Calu3 (cell line): ENCODE measurements at regions of chr12 and their contacts with region 1.

Region 1: DNA sequence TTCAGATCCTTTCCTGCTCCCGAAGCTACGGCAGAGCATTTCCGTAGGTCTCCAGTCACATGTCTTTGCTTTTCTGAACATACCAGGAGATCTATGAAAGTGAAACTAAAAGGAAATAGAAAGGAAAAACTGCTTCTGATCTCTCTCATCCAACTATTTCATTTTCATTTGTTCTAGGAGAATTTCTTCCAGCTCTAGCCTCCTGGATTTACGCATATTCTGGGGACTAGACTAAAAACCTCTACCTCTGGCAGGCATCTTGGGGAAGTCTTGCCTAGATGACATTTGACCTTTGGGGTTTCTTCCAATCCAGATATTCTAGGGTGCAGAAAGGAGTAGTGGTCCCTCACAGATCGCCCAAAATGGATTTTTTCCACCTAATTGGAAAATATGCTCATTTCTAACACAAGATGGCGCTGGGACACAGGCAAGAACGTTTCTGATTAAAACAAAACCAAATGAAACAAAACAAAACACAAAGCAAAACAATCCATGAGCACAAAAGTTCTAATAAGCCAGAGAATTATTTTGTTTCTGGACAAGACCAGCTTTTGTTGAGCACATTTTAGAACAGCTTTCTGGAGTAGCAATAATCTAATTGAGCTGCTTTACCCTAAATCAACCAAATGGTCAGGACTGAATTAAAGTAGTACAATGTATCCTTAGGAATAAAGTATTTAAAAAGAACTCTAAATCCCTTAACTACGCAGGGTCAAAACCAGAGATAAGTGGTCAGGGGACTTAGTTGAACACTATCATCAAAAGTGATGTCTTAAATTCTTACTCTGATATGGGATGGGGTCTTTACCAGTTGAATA is 12.3 kb upstream of the PARP11 start:
- DNase-seq: peak; percentile 5
- H3K4me3 Mint-ChIP-seq: no peak overlapping the region
- H3K27ac Mint-ChIP-seq: no peak overlapping the region
- H3K4me1 Mint-ChIP-seq: no peaks in the 10 kb centered on the region
- H3K27me3 Mint-ChIP-seq: peaks cover 23% of the 10 kb centered on the region
- CTCF ChIP-seq: peak; percentile 64

Region 2: DNA sequence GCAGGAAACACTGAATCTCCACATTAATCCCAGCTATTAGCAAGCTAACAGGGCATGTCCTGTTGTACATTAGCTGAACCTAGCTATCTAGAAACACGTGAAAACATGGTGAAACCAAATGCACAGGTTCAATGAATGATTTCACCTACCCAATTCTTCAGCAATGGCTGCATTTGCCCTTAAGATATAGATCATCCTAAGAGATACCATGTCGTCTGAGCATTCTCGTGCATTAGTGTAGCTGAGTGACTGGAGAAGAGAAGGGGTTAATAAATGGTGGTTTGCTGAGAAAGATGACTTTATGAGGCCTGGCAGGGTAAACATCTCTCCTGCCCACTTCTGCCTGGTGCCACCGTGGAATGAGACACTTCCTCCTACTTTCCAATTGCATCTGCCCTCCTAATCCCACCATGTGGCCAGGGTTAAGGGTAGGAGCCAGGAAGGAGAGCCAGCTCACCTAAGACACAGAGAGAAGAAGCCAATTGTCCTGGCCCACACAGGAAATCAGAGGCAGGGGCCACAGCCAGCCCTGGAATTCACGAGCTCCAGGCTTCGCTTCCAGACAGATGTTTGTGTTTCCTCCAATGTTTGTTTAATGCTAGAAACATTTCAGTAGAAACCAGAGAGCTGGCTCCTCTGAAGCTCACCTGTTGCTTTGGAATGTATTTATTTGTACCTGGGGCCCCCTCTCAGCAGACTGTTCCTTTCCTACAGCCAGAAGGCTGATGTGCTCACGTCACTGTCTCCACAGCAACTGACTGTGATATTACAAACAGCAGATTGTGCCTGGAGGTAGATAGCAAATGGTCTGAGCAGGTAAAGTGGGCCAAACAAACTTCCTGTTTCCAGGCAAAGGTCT is 113.7 kb after region 1 on chr12:
- CTCF ChIA-PET with region 1: interaction called, 7 read pairs
- intact Hi-C with region 1: loop called (anchors 5 kb)
- DNase-seq: peak; percentile 63
- H3K4me3 Mint-ChIP-seq: no peak overlapping the region
- H3K27ac Mint-ChIP-seq: peak overlapping the region; percentile 70
- H3K4me1 Mint-ChIP-seq: peaks cover 17% of the 10 kb centered on the region
- H3K27me3 Mint-ChIP-seq: peaks cover 11% of the 10 kb centered on the region
- CTCF ChIP-seq: no peak

Region 3: GRCh38 chr12:4037747-4038312 is 152.3 kb after region 1 on chr12:
- CTCF ChIA-PET with region 1: interaction called, 6 read pairs
- intact Hi-C with region 1: loop called (anchors 1 kb)
- DNase-seq: peak; percentile 57
- H3K4me3 Mint-ChIP-seq: no peak overlapping the region
- H3K27ac Mint-ChIP-seq: no peak overlapping the region
- H3K4me1 Mint-ChIP-seq: no peaks in the 10 kb centered on the region
- H3K27me3 Mint-ChIP-seq: peaks cover 98% of the 10 kb centered on the region
- CTCF ChIP-seq: peak; percentile 68